ENCODE measurements at regions of chr14 and their contacts with region 1.

Region 1: DNA sequence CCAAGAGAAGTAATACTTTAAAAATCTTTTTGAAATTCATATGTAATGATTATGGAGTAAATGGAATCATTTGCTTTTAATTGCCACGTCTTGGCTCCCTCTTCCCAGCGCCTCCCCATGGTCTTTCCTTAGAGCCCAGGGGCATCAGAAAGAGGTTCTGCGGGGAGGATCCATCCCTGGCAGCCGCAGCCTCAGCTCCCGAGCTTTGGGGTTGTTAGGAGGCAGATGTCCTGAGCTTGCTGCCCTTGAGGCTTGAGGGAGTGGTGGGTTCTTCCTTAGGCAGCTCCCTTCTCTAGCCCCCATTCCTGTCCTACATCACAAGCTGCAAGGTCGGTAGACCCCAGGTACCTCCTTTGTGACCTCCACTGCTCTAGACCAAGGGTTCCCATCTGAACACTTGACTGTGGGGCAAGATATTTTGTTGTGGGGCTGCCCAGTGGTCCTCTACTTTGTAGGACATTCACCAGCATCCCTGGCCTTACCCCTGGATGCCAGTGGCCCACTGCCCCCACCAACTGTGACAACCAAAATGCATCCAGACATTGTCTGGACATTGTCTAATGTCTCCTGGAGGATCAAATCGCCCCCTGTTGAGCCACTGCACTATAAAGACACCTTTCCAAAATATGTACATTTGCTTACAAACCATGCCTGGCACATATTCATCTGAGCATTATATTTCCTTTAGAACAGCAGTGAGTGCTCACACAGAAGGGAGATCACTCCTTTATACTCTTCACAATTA is 6.3 kb downstream of the PPP2R5C start:
- DNase-seq: no peak
- H3K4me3 ChIP-seq: no peak overlapping the region
- H3K4me3 Mint-ChIP-seq: no peak overlapping the region
- H3K27ac ChIP-seq: no peak overlapping the region
- H3K27ac Mint-ChIP-seq: no peak overlapping the region
- H3K4me1 ChIP-seq: peaks cover 45% of the 10 kb centered on the region
- H3K4me1 Mint-ChIP-seq: peaks cover 29 to 37% (median 34%) of the 10 kb centered on the region in 4 donors
- H3K27me3 ChIP-seq: no peaks in the 10 kb centered on the region
- H3K27me3 Mint-ChIP-seq: no peaks in the 10 kb centered on the region

Region 2: DNA sequence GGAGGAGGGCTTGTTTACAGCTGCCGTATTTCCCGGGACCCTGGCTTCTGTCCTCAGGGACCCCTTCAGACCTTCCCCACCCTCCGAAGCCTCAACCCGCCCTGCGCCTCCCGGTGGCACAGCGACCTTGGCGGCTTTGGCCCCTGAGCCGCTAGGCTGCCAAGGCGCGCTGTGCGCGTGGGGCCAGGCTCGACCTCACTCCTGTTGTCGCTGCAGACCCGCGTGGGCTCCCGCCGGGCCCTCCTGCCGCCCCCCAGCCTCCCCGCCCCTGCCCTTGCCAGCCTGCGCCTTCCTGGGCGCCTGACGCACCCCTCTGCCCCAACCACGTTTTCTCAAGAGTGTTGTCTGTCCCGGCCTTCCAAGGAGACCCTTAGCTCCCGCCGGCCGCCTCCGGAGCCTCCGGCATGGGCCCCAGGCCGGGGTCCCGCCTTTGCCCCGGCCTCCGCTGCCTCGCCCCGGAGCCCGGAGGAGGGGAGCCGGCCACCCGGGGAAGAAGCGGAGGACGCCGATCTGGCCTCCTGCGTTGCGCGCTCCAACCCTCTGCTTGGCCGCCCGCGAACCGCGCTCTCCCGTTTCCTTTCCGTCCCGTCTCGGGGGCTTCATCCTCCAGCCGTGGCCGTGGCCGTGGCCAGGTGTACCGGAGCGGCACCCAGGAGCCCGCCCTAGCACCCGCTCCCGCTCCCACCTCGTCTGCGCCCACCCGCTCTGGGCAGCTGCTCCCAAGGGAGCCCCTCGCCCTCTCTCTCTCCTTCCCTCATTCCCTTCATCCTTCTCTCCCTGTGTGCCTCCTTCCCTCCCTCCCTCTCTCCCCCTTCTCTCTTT is 13.7 kb after region 1 on chr14:
- CTCF ChIA-PET with region 1: interaction called, 11 read pairs
- POLR2A ChIA-PET with region 1: interaction called, 5 read pairs
- intact Hi-C with region 1: no loop called
- DNase-seq: peak in 4 of 5 donors; percentile 26 to 41 (median 34)
- H3K4me3 ChIP-seq: peak overlapping the region; percentile 11 to 45
- H3K4me3 Mint-ChIP-seq: peak overlapping the region; percentile 67 to 86 (median 74)
- H3K27ac ChIP-seq: peak overlapping the region; percentile 8
- H3K27ac Mint-ChIP-seq: peak overlapping the region in 4 of 7 donors; percentile 25 to 83 (median 38)
- H3K4me1 ChIP-seq: peaks cover 8% of the 10 kb centered on the region
- H3K4me1 Mint-ChIP-seq: peaks cover 12 to 26% (median 21%) of the 10 kb centered on the region in 4 donors
- H3K27me3 ChIP-seq: no peaks in the 10 kb centered on the region
- H3K27me3 Mint-ChIP-seq: no peaks in the 10 kb centered on the region

Region 3: GRCh38 chr14:101809671-101810514 is 42.1 kb after region 1 on chr14:
- CTCF ChIA-PET with region 1: interaction called, 44 read pairs
- POLR2A ChIA-PET with region 1: interaction called, 49 read pairs
- intact Hi-C with region 1: no loop called
- DNase-seq: peak; percentile 91 to 97 (median 95)
- H3K4me3 ChIP-seq: peak overlapping the region; percentile 85 to 97
- H3K4me3 Mint-ChIP-seq: peak overlapping the region; percentile 90 to 97 (median 95)
- H3K27ac ChIP-seq: peak overlapping the region; percentile 98
- H3K27ac Mint-ChIP-seq: peak overlapping the region; percentile 97 to 100 (median 99)
- H3K4me1 ChIP-seq: peaks cover 46% of the 10 kb centered on the region
- H3K4me1 Mint-ChIP-seq: peaks cover 31 to 62% (median 46%) of the 10 kb centered on the region in 4 donors
- H3K27me3 ChIP-seq: no peaks in the 10 kb centered on the region
- H3K27me3 Mint-ChIP-seq: no peaks in the 10 kb centered on the region

Region 4: DNA sequence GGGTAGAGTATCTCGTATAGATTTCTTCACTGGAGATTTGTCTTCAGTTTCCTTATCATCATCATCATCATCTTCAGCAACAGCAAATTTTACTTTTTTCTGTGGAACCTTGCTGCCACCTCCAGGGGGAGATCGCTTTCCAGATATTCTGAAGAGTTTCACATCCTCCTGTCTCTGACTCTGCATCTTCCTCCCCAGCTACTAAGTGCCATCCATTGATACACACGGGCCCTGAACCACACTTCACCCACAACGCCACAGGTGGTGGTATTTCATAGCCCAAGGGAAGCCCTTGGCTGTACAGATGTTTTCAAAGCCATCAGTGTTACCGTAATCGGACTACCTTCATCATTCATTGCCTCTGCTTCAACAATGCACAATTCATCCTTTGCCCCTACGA is 75.9 kb after region 1 on chr14:
- CTCF ChIA-PET with region 1: interaction called, 112 read pairs
- POLR2A ChIA-PET with region 1: interaction called, 33 read pairs
- intact Hi-C with region 1: loop called (anchors 1 kb)
- DNase-seq: peak; percentile 65 to 83 (median 67)
- H3K4me3 ChIP-seq: no peak overlapping the region
- H3K4me3 Mint-ChIP-seq: peak overlapping the region in 7 of 8 donors; percentile 23 to 81 (median 50)
- H3K27ac ChIP-seq: peak overlapping the region; percentile 7
- H3K27ac Mint-ChIP-seq: peak overlapping the region; percentile 76 to 95 (median 92)
- H3K4me1 ChIP-seq: peaks cover 96% of the 10 kb centered on the region
- H3K4me1 Mint-ChIP-seq: peaks cover 72 to 98% (median 86%) of the 10 kb centered on the region in 4 donors
- H3K27me3 ChIP-seq: no peaks in the 10 kb centered on the region
- H3K27me3 Mint-ChIP-seq: no peaks in the 10 kb centered on the region

Region 5: GRCh38 chr14:101854366-101854765 is 86.6 kb after region 1 on chr14:
- CTCF ChIA-PET with region 1: interaction called, 24 read pairs
- POLR2A ChIA-PET with region 1: interaction called, 10 read pairs
- intact Hi-C with region 1: no loop called
- DNase-seq: peak; percentile 34 to 56 (median 43)
- H3K4me3 ChIP-seq: no peak overlapping the region
- H3K4me3 Mint-ChIP-seq: peak overlapping the region in 7 of 8 donors; percentile 49 to 80 (median 70)
- H3K27ac ChIP-seq: peak overlapping the region; percentile 39
- H3K27ac Mint-ChIP-seq: peak overlapping the region; percentile 45 to 94 (median 84)
- H3K4me1 ChIP-seq: peaks cover 93% of the 10 kb centered on the region
- H3K4me1 Mint-ChIP-seq: peaks cover 74 to 96% (median 84%) of the 10 kb centered on the region in 4 donors
- H3K27me3 ChIP-seq: no peaks in the 10 kb centered on the region
- H3K27me3 Mint-ChIP-seq: no peaks in the 10 kb centered on the region

Region 6: DNA sequence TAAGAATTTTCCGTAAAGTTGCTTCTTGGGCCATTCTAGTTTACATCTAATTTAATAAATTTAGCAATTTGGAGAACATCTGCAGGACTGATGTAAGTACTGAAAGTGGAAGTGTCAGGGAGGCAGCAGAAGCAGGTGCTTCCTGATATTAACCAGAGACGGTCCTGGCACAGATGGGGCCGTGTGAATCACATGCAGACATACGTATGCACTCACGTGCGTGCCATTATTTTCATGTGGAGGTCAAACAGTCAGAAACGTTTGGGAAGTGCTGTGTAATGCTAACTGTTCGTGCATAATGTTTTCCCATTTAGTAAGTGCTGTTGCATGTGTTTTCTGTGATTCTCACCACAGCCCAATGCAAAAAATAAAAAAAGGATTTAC is 108.8 kb after region 1 on chr14:
- CTCF ChIA-PET with region 1: interaction called, 17 read pairs
- POLR2A ChIA-PET with region 1: interaction called, 3 read pairs
- intact Hi-C with region 1: loop called (anchors 5 kb)
- DNase-seq: peak; percentile 71 to 94 (median 82)
- H3K4me3 ChIP-seq: peak overlapping the region in 1 of 2 donors; percentile 8
- H3K4me3 Mint-ChIP-seq: peak overlapping the region; percentile 59 to 86 (median 76)
- H3K27ac ChIP-seq: peak overlapping the region; percentile 65
- H3K27ac Mint-ChIP-seq: peak overlapping the region; percentile 73 to 97 (median 91)
- H3K4me1 ChIP-seq: peaks cover 88% of the 10 kb centered on the region
- H3K4me1 Mint-ChIP-seq: peaks cover 55 to 88% (median 74%) of the 10 kb centered on the region in 4 donors
- H3K27me3 ChIP-seq: no peaks in the 10 kb centered on the region
- H3K27me3 Mint-ChIP-seq: no peaks in the 10 kb centered on the region